AG04450 (cell line): ENCODE measurements at regions of chr17 and their contacts with region 1.

Region 1: GRCh38 chr17:54992797-54993639 is 24.5 kb downstream of the STXBP4 start:
- DNase-seq: no peak
- H3K4me3 ChIP-seq: no peak overlapping the region
- H3K27ac ChIP-seq: no peak overlapping the region
- H3K27me3 ChIP-seq: no peaks in the 10 kb centered on the region
- CTCF ChIP-seq: peak; percentile 65

Region 2: GRCh38 chr17:53186001-53186400 is 1807.0 kb before region 1 on chr17:
- CTCF ChIA-PET with region 1: no interaction called
- POLR2A ChIA-PET with region 1: no interaction called
- DNase-seq: no peak
- H3K4me3 ChIP-seq: no peak overlapping the region
- H3K27ac ChIP-seq: no peak overlapping the region
- H3K27me3 ChIP-seq: no peaks in the 10 kb centered on the region
- CTCF ChIP-seq: no peak

Region 3: GRCh38 chr17:54891176-54891821 is 101.7 kb before region 1 on chr17:
- CTCF ChIA-PET with region 1: no interaction called
- POLR2A ChIA-PET with region 1: no interaction called
- DNase-seq: peak; percentile 57
- H3K4me3 ChIP-seq: no peak overlapping the region
- H3K27ac ChIP-seq: no peak overlapping the region
- H3K27me3 ChIP-seq: no peaks in the 10 kb centered on the region
- CTCF ChIP-seq: peak; percentile 56

Region 4: GRCh38 chr17:54968262-54968987 is 24.6 kb before region 1 on chr17 and contains the starts of genes COX11 and STXBP4:
- CTCF ChIA-PET with region 1: interaction called, 31 read pairs
- POLR2A ChIA-PET with region 1: no interaction called
- DNase-seq: peak; percentile 92
- H3K4me3 ChIP-seq: peak within 1 kb of the TSS; percentile 91
- H3K27ac ChIP-seq: peak within 1 kb of the TSS; percentile 72
- H3K27me3 ChIP-seq: no peaks in the 10 kb centered on the region
- CTCF ChIP-seq: peak; percentile 50
- polyA plus RNA-seq, gene COX11: 27.8 and 31.5 TPM in 2 replicates
- polyA plus RNA-seq, gene STXBP4: 6.5 and 9.7 TPM in 2 replicates

Region 5: GRCh38 chr17:55005520-55005919 is 12.5 kb after region 1 on chr17:
- CTCF ChIA-PET with region 1: interaction called, 57 read pairs
- POLR2A ChIA-PET with region 1: no interaction called
- DNase-seq: no peak
- H3K4me3 ChIP-seq: no peak overlapping the region
- H3K27ac ChIP-seq: no peak overlapping the region
- H3K27me3 ChIP-seq: no peaks in the 10 kb centered on the region
- CTCF ChIP-seq: peak; percentile 41

Region 6: DNA sequence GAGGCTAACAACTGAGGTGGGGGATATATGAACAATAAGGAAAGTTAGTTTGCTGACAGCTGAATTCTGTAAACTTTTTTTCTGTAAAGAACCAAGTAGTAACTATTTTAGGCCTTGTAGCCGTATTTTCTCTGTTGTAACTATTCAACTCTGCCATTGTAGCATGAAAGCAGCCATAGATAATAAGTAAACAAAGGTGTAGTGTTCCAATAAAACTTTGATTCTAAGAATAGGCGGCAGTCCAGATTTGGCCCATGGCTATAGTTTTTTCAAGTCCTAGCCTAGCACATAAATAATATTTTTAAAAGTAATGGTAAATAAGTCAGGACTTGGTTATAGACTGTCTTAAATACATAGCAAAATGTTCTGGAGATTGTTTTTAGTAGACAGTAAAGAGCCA is 117.5 kb after region 1 on chr17:
- CTCF ChIA-PET with region 1: no interaction called
- POLR2A ChIA-PET with region 1: no interaction called
- DNase-seq: no peak
- H3K4me3 ChIP-seq: no peak overlapping the region
- H3K27ac ChIP-seq: no peak overlapping the region
- H3K27me3 ChIP-seq: no peaks in the 10 kb centered on the region
- CTCF ChIP-seq: no peak

Region 7: DNA sequence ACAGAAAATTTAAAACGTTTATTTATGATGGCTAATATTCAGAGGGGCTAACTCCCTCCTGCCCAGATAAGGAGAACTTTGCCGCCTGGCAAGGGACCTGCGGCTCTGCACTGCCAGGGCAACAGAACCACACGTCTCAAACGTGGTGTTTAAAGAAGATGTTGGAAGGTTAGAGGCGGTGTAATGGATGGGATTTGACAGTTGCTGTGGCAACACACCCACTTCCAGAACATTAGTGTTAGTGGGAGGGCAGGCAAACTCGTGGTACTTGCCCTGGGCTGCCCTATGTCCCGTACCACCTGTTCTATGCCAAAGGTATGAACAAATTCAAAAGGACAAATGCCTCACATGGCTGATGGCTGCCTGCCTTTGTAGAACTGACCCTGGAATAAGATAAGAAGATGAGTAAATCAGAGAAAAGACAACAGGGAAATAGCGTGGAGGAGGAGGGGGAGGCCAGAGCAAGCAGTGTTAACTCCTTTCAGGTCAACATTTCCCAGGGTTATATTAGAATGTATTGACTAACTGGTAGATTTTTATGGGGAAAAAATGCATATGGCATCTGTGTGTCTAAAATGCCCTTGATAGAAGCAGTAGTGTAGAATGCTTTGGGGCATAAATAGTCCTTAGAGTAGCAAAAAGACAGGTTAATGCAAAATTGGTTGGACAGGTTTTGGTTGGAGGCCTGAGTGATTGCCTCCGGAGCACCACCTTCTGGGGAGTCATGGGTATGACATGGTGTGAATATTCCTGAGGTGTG is 302.6 kb after region 1 on chr17:
- CTCF ChIA-PET with region 1: interaction called, 89 read pairs
- POLR2A ChIA-PET with region 1: no interaction called
- DNase-seq: peak; percentile 7
- H3K4me3 ChIP-seq: no peak overlapping the region
- H3K27ac ChIP-seq: no peak overlapping the region
- H3K27me3 ChIP-seq: peaks cover 2% of the 10 kb centered on the region
- CTCF ChIP-seq: peak; percentile 92

Region 8: DNA sequence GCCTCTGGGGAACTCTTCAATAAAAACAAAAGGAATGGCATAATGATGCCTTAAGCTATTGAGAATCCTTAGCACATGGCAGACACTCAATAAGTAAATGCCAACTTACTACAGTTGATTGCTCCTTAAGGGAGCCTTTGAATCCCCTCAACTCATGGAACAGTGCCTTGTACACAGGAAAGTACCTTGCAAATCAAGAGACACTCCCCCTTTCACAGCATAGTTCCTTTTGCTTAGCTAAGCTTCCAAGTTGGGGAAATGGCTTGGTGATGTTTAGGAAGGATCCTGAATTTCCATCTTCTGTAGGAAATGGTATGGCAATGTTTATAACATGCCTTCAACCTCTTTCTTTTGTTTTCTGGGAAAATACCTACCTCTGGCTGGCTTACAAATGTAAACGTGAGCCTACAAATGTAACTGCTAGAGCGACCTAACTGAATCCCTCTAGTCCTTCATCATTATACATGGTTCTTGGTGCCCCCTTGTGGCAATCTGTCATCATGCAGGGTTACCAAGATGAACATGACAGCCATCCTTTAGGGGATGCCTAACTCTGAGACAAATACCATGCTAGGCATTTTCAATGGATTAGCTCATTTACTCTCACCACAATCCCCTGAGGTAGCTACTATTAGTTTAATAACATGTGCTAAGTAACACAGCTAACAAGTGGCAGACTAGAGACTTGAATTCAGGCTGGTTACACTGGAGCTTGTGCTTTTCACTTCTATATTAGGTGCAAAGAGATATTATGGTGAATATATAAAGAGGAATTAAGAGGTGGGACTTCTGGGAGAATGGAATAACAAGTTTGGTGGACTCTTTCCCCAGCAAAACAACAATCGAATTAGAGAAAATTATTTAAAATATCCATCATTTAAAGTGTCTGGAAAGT is 363.7 kb after region 1 on chr17:
- CTCF ChIA-PET with region 1: interaction called, 81 read pairs
- POLR2A ChIA-PET with region 1: no interaction called
- DNase-seq: peak; percentile 13
- H3K4me3 ChIP-seq: no peak overlapping the region
- H3K27ac ChIP-seq: no peak overlapping the region
- H3K27me3 ChIP-seq: peaks cover 3% of the 10 kb centered on the region
- CTCF ChIP-seq: peak; percentile 74